Dendritic cell treated with granulocyte-macrophage colony-stimulating factor and Interleukin-4, amounts not matched to agents 40 ng/mL and 50 ng/mL, for 4 days (primary cell): ENCODE measurements at regions of chr4 and their contacts with region 1.

Region 1: DNA sequence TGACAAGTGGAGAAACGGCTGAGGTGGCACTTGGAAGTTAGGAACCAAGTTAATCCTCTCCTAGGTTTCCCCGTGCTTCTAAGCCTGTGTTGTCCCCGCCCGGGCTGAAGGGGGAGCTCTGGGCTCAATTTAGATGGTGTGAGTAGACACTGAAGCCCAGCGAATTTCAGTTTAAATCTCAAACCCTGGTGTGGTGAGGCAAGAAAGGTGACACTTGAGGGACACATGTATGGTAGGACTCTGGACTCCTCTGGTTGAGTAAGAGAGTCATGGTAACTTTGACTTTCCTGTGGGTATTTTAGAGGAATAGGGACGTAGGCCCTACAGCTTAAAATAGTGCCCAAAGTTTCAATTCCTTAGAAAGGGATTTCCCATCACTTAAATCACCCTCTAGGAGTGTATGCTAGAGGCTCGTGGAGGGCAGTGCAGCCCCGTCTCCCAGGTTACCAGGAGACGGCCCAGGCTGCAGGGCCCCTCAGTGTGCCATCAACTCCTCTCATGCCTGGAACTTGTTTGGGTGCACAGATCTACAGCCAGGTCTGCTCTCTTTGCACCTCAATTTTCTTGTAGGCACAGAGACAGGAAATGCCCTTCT is 24.0 kb downstream of the HAND2 start:
- H3K4me3 Mint-ChIP-seq: peak overlapping the region; percentile 67
- H3K27ac Mint-ChIP-seq: no peak overlapping the region
- H3K4me1 Mint-ChIP-seq: peaks cover 75% of the 10 kb centered on the region
- H3K27me3 Mint-ChIP-seq: peaks cover 98% of the 10 kb centered on the region

Region 2: DNA sequence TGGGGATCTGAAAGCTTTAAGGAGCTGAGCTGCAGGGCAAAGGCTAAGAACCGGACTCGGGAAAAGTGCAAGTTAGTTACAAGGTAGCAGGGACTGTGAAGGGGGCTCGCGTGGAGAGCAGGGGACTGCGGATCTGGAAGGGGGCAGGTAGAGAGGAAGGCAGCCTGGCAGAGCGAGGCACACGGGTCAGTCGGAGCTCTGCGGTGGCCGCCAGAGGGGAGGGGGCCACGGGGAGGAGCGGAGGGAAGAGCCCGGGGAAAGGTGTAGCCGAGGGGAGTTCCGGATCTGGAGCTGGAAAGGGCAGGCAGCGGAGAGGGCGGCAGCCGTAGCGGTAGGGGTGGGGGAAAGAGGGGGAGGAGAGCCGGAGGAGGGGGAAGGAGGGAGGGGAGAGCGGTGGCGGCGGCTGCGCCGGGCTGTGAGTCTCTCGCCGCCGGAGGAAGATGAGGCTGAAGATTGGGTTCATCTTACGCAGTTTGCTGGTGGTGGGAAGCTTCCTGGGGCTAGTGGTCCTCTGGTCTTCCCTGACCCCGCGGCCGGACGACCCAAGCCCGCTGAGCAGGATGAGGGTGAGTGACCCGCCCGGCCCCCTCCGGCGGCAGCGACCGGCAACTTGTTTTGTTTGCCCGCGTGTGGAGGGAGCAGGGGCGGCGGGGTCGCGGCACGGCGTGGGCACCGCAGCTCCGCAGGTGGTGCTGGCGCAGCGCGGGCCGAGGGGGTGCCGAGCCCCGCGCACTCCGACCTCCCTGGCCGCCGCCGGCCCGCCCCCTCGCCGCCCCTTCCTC is 337.4 kb before region 1 on chr4 and contains the start of gene GALNT7:
- intact Hi-C with region 1: loop called (anchors 10 kb)
- H3K4me3 Mint-ChIP-seq: peak within 1 kb of the TSS; percentile 90
- H3K27ac Mint-ChIP-seq: peak within 1 kb of the TSS; percentile 87
- H3K4me1 Mint-ChIP-seq: peaks cover 46% of the 10 kb centered on the region
- H3K27me3 Mint-ChIP-seq: no peaks in the 10 kb centered on the region

Region 3: GRCh38 chr4:173752610-173753230 is 246.7 kb after region 1 on chr4:
- intact Hi-C with region 1: loop called (anchors 2 kb)
- H3K4me3 Mint-ChIP-seq: no peak overlapping the region
- H3K27ac Mint-ChIP-seq: no peak overlapping the region
- H3K4me1 Mint-ChIP-seq: no peaks in the 10 kb centered on the region
- H3K27me3 Mint-ChIP-seq: no peaks in the 10 kb centered on the region

Region 4: GRCh38 chr4:174120446-174121295 is 614.6 kb after region 1 on chr4:
- intact Hi-C with region 1: loop called (anchors 2 kb)
- H3K4me3 Mint-ChIP-seq: peak overlapping the region; percentile 61
- H3K27ac Mint-ChIP-seq: no peak overlapping the region
- H3K4me1 Mint-ChIP-seq: peaks cover 11% of the 10 kb centered on the region
- H3K27me3 Mint-ChIP-seq: peaks cover 34% of the 10 kb centered on the region

Region 5: GRCh38 chr4:174156239-174156826 is 650.3 kb after region 1 on chr4:
- intact Hi-C with region 1: loop called (anchors 10 kb)
- H3K4me3 Mint-ChIP-seq: no peak overlapping the region
- H3K27ac Mint-ChIP-seq: no peak overlapping the region
- H3K4me1 Mint-ChIP-seq: no peaks in the 10 kb centered on the region
- H3K27me3 Mint-ChIP-seq: peaks cover 12% of the 10 kb centered on the region

Region 6: DNA sequence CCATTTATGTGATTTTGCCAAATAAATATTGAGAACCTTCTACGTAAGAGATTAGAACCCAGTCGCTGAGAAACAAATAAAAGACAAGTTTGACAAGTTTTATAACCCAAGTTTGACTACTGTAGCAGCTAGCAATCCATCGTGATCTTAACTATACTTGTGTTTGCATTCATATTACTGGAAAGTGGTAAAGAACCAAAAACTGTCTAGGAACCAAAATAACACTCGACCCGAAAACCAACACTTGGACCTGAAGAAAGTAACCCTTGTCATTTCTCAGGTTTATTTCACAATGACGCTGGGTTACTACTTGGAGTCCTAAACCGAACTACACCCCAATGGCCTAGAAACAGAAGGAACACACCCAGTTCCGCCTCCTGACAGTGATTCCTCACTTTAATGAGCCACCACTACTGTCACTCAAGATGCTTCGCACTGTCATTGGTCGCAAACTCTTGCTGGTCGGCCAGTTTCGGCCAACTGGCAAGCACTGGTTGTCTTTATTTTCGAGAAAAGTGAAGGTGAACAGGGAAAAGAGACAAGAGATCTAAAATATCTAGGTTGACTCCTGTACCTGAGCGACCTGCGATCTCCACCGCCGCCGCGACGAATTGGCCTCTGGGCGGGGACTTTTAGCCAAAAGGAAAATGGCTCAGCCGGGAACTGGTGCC is 777.0 kb after region 1 on chr4:
- intact Hi-C with region 1: loop called (anchors 10 kb)
- H3K4me3 Mint-ChIP-seq: peak overlapping the region; percentile 93
- H3K27ac Mint-ChIP-seq: peak overlapping the region; percentile 100
- H3K4me1 Mint-ChIP-seq: peaks cover 47% of the 10 kb centered on the region
- H3K27me3 Mint-ChIP-seq: no peaks in the 10 kb centered on the region